BJ (cell line): ENCODE measurements at regions of chr9 and their contacts with region 1.

Region 1: GRCh38 chr9:105414947-105415661 is 32.7 kb upstream of the FSD1L start:
- DNase-seq: no peak
- H3K4me3 ChIP-seq: no peak overlapping the region
- H3K27me3 ChIP-seq: no peaks in the 10 kb centered on the region
- CTCF ChIP-seq: peak; percentile 83

Region 2: GRCh38 chr9:104780799-104781395 is 634.2 kb before region 1 on chr9:
- CTCF ChIA-PET with region 1: interaction called, 12 read pairs
- POLR2A ChIA-PET with region 1: no interaction called
- DNase-seq: no peak
- H3K4me3 ChIP-seq: no peak overlapping the region
- H3K27me3 ChIP-seq: no peaks in the 10 kb centered on the region
- CTCF ChIP-seq: peak; percentile 48

Region 3: GRCh38 chr9:105157130-105157583 is 257.9 kb before region 1 on chr9:
- CTCF ChIA-PET with region 1: interaction called, 55 read pairs
- POLR2A ChIA-PET with region 1: no interaction called
- DNase-seq: peak; percentile 44
- H3K4me3 ChIP-seq: no peak overlapping the region
- H3K27me3 ChIP-seq: no peaks in the 10 kb centered on the region
- CTCF ChIP-seq: peak; percentile 48

Region 4: DNA sequence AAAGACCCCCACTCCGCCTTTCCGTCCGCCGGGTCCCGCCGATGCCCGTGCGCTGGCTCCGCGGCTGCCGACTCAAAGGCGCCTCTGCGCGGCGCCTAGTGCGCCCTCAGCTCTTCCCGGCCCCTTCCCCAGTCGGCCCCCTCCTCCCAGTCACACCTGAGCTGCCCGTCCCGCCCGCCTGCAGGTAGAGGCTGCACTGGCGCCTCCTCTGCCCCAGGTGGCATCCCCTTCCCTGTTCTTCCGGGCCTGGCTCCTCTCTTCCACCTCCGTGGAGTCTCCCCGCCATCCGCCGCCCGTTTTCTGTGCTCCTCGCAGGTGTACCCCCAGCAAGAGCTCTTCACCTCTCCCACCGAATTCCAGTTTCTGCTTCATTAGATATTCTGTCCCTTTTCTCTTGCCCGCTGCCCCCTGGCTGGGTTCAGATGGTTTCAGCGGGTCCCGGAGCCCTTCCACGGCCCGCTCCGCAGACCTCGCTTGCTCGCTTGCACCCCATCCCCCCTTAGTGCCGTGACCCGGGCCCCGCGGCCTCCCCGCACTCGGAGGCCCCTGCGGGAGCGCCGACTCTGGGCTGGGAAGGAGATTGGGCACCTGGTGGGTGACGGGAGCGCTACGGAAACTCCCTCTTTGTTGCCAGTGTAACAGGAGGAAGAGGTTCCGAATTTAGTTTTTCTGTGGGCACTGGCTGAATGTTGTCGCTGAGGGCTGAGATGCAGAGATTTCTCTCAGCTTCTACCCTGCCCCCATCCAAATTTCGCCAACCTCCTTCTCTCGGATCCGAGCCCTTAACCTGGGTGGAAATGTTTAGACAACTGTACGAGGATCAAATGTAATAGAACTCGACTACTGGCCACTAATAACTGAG is 169.8 kb before region 1 on chr9:
- CTCF ChIA-PET with region 1: interaction called, 10 read pairs
- POLR2A ChIA-PET with region 1: no interaction called
- DNase-seq: no peak
- H3K4me3 ChIP-seq: peak overlapping the region; percentile 92
- H3K27me3 ChIP-seq: no peaks in the 10 kb centered on the region; the same call in 1 of the 2 replicates
- CTCF ChIP-seq: 0 out of 2 replicates have a peak, but pooled peaks have one; percentile 5